WTC11 (cell line): ENCODE measurements at regions of chr15 and their contacts with region 1.

Region 1: DNA sequence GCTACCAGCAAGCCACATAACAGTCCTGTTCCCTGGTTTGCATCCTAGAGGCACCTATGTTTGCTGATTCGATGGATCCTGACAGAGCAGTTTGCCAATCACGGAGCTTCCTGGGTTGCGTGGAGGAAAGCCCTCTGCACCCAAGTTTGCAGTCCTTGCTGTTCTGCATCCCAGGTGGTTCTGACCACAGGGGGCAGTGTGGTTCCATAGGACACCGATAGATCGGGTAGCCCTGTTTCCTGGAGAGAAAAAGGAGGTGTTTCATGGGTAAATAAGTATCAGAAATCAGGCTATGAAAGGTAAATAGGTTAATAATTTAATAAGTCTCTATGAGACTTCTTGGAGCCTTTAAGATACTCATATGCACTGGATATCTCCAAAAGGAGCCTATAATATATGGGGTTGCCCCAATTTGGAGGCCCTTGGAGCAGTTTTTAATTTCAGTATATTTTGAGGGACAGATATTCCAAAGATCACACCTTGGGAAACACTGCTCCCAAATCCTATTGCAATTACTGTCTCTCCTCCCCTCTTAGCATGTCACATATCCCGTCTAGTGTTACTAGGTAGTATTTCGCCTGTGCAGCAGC is 194.6 kb upstream of the TPM1 start:
- DNase-seq: peak; percentile 88
- ATAC-seq: peak; percentile 23
- H3K4me3 Mint-ChIP-seq: no peak overlapping the region
- H3K27ac Mint-ChIP-seq: peak overlapping the region; percentile 92; the same call in 1 of the 2 replicates
- H3K4me1 Mint-ChIP-seq: peaks cover 63% of the 10 kb centered on the region
- H3K27me3 Mint-ChIP-seq: no peaks in the 10 kb centered on the region; the same call in 1 of the 2 replicates
- CTCF ChIP-seq: peak; percentile 62

Region 2: GRCh38 chr15:62886431-62887071 is 38.6 kb after region 1 on chr15:
- CTCF ChIA-PET with region 1: interaction called, 11 read pairs
- POLR2A ChIA-PET with region 1: no interaction called
- DNase-seq: peak; percentile 61
- ATAC-seq: peak; percentile 88
- H3K4me3 Mint-ChIP-seq: peak overlapping the region; percentile 41
- H3K27ac Mint-ChIP-seq: peak overlapping the region; percentile 75
- H3K4me1 Mint-ChIP-seq: peaks cover 26% of the 10 kb centered on the region
- H3K27me3 Mint-ChIP-seq: no peaks in the 10 kb centered on the region; the same call in 1 of the 2 replicates
- CTCF ChIP-seq: no peak